ENCODE measurements at regions of chr22 and their contacts with region 1.

Region 1: DNA sequence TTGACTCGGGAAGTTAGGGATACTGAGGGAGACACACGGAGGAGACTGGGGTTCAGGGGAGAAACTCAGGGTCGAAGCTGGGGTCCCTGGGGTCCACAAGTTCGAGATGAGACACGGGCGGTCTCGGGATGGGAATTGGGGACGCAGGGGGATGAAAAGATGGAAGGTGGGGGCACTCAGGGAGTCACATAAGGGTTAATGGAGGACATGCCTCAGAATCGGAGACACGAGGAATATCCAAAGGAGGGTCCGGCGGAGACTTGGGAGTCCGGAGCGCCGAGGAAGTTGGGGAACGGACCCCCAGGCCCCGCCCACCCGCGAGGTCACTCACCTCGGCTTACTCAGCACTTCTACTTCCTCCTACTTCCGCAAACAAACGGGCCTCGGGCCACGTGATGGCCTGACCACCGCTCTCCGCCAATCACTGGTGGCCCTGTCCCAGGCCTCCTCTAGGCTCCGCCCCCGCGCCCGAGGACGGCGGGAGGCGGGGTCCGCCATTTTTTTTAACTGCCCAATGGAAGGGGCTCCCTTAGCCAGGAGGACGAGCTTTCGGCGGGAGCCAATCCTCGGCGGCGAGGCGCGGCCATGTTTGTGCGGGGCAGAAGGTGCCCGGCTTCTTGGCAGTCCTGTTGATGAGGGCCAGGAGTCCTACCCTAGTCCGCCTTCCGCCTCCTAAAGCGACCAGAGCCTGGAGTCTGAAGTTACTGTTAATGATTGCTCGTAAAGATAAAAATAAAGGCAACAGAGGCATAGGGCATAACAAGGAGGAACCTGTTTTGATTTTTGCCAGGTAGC is at the start of gene PLA2G6:
- DNase-seq: peak; percentile 98
- ATAC-seq: peak; percentile 96
- H3K4me3 ChIP-seq: peak within 1 kb of the TSS; percentile 73 to 88 (median 79)
- H3K4me3 Mint-ChIP-seq: peak within 1 kb of the TSS; percentile 89
- H3K27ac ChIP-seq: peak within 1 kb of the TSS; percentile 64 to 67
- H3K27ac Mint-ChIP-seq: peak within 1 kb of the TSS; percentile 93
- H3K4me1 ChIP-seq: peaks cover 23 to 28% of the 10 kb centered on the region in 2 donors
- H3K4me1 Mint-ChIP-seq: peaks cover 35% of the 10 kb centered on the region
- H3K27me3 ChIP-seq: no peaks in the 10 kb centered on the region
- H3K27me3 Mint-ChIP-seq: peaks cover 7% of the 10 kb centered on the region
- CTCF ChIP-seq: no peak
- total RNA-seq, gene PLA2G6: 125 and 128 TPM in 2 replicates

Region 2: DNA sequence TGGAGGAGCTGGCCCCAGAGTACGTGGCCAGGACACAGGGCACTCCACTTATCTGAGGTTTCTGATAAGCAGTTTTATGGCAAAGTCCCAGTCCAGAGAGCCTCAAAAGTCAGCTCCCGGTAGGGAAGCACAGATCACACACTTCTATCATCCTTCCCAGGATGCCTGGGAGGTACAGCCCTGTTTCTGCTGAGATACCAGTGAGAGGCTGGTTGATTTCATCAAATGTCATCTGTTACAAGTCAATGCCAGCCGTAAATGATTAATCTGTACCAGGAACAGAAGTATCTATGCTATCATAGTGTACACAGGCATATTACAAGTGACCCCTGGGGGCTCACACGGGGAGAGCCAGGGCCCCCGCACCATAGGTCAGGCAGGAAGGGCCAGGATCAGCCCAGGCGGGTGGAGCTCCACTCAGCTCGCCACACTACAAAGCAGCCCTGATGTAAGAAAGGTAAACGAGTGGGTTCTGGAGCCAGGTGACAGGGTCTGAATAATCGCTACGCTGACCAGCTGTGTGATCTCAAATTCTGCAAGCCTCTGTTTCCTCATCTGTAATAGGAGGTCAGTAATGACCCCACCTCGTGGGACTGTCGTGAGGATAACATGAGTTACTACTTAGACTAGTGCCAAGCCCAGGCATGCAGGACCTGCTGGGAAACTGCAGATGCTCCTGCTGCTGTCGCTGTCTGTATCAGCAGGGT is 17.7 kb before region 1 on chr22:
- CTCF ChIA-PET with region 1: interaction called, 3 read pairs
- POLR2A ChIA-PET with region 1: interaction called, 3 read pairs
- intact Hi-C with region 1: loop called (anchors 1 kb)
- DNase-seq: no peak
- ATAC-seq: no peak
- H3K4me3 ChIP-seq: no peak overlapping the region
- H3K4me3 Mint-ChIP-seq: no peak overlapping the region
- H3K27ac ChIP-seq: no peak overlapping the region
- H3K27ac Mint-ChIP-seq: peak overlapping the region; percentile 68
- H3K4me1 ChIP-seq: peaks cover 22 to 23% of the 10 kb centered on the region in 2 donors
- H3K4me1 Mint-ChIP-seq: peaks cover 32% of the 10 kb centered on the region
- H3K27me3 ChIP-seq: no peaks in the 10 kb centered on the region
- H3K27me3 Mint-ChIP-seq: no peaks in the 10 kb centered on the region
- CTCF ChIP-seq: no peak

Region 3: DNA sequence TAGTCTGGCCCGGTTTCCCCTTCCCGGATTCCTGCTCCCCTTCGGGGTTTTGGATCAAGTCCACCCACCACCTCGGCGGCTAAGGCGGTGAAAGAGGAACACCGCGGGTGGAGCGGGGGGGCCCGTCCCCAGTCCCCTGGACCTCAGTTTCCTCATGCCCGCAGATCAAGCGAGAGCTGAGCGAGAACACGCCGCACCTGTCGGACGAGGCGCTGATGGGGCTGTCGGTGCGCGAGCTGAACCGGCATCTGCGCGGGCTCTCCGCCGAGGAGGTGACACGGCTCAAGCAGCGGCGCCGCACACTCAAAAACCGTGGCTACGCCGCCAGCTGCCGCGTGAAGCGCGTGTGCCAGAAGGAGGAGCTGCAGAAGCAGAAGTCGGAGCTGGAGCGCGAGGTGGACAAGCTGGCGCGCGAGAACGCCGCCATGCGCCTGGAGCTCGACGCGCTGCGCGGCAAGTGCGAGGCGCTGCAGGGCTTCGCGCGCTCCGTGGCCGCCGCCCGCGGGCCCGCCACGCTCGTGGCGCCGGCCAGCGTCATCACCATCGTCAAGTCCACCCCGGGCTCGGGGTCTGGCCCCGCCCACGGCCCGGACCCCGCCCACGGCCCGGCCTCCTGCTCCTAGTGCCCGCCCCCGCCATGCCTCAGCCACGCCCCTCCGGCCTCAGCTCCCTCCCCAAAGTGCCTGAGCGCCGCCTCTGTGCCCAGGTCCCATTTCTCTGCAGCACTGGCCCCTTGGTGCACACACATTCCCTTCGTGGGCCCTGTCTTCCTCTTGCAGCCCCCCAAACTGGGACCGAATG is 32.8 kb after region 1 on chr22:
- CTCF ChIA-PET with region 1: interaction called, 3 read pairs
- POLR2A ChIA-PET with region 1: no interaction called
- intact Hi-C with region 1: loop called (anchors 1 kb)
- DNase-seq: peak; percentile 82
- ATAC-seq: peak; percentile 84
- H3K4me3 ChIP-seq: peak overlapping the region in 4 of 5 experiments; percentile 20 to 51 (median 34)
- H3K4me3 Mint-ChIP-seq: peak overlapping the region; percentile 78
- H3K27ac ChIP-seq: no peak overlapping the region
- H3K27ac Mint-ChIP-seq: peak overlapping the region; percentile 15
- H3K4me1 ChIP-seq: peaks cover 5 to 18% of the 10 kb centered on the region in 2 donors
- H3K4me1 Mint-ChIP-seq: peaks cover 19% of the 10 kb centered on the region
- H3K27me3 ChIP-seq: no peaks in the 10 kb centered on the region
- H3K27me3 Mint-ChIP-seq: no peaks in the 10 kb centered on the region
- CTCF ChIP-seq: peak; percentile 37

Region 4: DNA sequence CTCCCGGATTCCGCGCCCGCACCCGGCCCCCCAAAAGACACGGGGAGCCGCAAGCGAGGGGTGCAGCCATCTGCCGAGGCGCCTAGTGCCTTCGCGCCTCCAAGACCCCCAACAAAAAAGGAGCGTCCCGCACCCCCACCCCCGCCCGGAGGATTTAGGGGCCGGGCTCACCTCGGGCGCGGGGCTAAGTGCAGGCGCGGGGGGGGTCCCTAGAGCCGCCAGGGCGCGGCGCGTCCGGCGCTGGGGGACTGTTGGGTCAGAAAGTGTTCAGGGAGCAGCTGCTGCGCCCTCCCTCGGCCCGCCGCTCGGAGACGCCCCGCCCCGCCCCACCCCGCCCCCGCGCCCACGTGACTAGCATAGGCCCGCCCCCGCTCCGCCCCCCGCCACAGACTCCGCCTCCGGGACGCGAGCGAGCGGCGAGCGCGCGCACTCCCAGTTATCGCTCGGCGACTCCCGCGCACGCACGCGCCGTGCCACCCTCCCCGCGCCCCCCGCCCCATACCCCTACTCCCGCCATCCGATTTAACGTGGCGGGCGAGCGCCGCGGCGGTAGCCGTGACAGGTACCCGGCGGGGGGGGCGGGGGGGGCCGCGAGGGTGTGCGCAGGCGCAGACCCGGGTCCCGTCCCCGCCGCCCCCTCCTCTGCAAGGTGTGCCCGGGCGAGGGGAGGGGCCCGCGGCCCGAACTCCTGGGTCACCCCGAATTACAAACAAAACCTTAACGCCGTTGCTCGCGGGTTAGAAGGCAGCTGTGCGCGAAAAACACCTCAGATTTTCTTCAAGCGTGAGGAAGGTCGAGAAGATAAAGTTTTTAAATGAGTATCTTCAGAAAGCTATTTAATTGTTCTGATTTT is 217.2 kb after region 1 on chr22:
- CTCF ChIA-PET with region 1: no interaction called
- POLR2A ChIA-PET with region 1: no interaction called
- intact Hi-C with region 1: loop called (anchors 5 kb)
- DNase-seq: peak; percentile 87
- ATAC-seq: peak; percentile 76
- H3K4me3 ChIP-seq: peak overlapping the region; percentile 2 to 75 (median 61)
- H3K4me3 Mint-ChIP-seq: peak overlapping the region; percentile 84
- H3K27ac ChIP-seq: peak overlapping the region; percentile 82 to 86
- H3K27ac Mint-ChIP-seq: peak overlapping the region; percentile 91
- H3K4me1 ChIP-seq: peaks cover 23 to 28% of the 10 kb centered on the region in 2 donors
- H3K4me1 Mint-ChIP-seq: peaks cover 36% of the 10 kb centered on the region
- H3K27me3 ChIP-seq: no peaks in the 10 kb centered on the region
- H3K27me3 Mint-ChIP-seq: no peaks in the 10 kb centered on the region
- CTCF ChIP-seq: no peak

Region 5: GRCh38 chr22:38623351-38623750 is 441.7 kb after region 1 on chr22:
- CTCF ChIA-PET with region 1: no interaction called
- POLR2A ChIA-PET with region 1: no interaction called
- intact Hi-C with region 1: no loop called
- DNase-seq: no peak
- ATAC-seq: no peak
- H3K4me3 ChIP-seq: no peak overlapping the region
- H3K4me3 Mint-ChIP-seq: no peak overlapping the region
- H3K27ac ChIP-seq: no peak overlapping the region
- H3K27ac Mint-ChIP-seq: no peak overlapping the region
- H3K4me1 ChIP-seq: no peaks in the 10 kb centered on the region
- H3K4me1 Mint-ChIP-seq: no peaks in the 10 kb centered on the region
- H3K27me3 ChIP-seq: no peaks in the 10 kb centered on the region
- H3K27me3 Mint-ChIP-seq: peaks cover 19% of the 10 kb centered on the region
- CTCF ChIP-seq: no peak

Region 6: GRCh38 chr22:38705235-38706100 is 523.8 kb after region 1 on chr22 and contains the start of gene GTPBP1:
- CTCF ChIA-PET with region 1: no interaction called
- POLR2A ChIA-PET with region 1: interaction called, 4 read pairs
- intact Hi-C with region 1: loop called (anchors 10 kb)
- DNase-seq: peak; percentile 100
- ATAC-seq: peak; percentile 75
- H3K4me3 ChIP-seq: peak within 1 kb of the TSS; percentile 64 to 93 (median 88)
- H3K4me3 Mint-ChIP-seq: peak within 1 kb of the TSS; percentile 94
- H3K27ac ChIP-seq: peak within 1 kb of the TSS; percentile 83 to 91
- H3K27ac Mint-ChIP-seq: peak within 1 kb of the TSS; percentile 98
- H3K4me1 ChIP-seq: peaks cover 51 to 54% of the 10 kb centered on the region in 2 donors
- H3K4me1 Mint-ChIP-seq: peaks cover 65% of the 10 kb centered on the region
- H3K27me3 ChIP-seq: no peaks in the 10 kb centered on the region
- H3K27me3 Mint-ChIP-seq: no peaks in the 10 kb centered on the region
- CTCF ChIP-seq: peak; percentile 26
- total RNA-seq, gene GTPBP1: 174 and 175 TPM in 2 replicates

Measured in B cell (primary cell).